A673 (cell line): ENCODE measurements at regions of chr7 and their contacts with region 1.

Region 1: GRCh38 chr7:148142660-148143248 is 447.8 kb upstream of the C7orf33 start:
- DNase-seq: peak; percentile 72
- H3K4me3 ChIP-seq: no peak overlapping the region
- H3K27ac ChIP-seq: no peak overlapping the region
- H3K4me1 ChIP-seq: peaks cover 8% of the 10 kb centered on the region
- H3K27me3 ChIP-seq: no peaks in the 10 kb centered on the region
- CTCF ChIP-seq: peak; percentile 70

Region 2: GRCh38 chr7:147245292-147245691 is 897.5 kb before region 1 on chr7:
- CTCF ChIA-PET with region 1: no interaction called
- POLR2A ChIA-PET with region 1: no interaction called
- intact Hi-C with region 1: loop called (anchors 10 kb)
- DNase-seq: peak; percentile 63
- H3K4me3 ChIP-seq: no peak overlapping the region
- H3K27ac ChIP-seq: no peak overlapping the region
- H3K4me1 ChIP-seq: no peaks in the 10 kb centered on the region
- H3K27me3 ChIP-seq: no peaks in the 10 kb centered on the region
- CTCF ChIP-seq: peak; percentile 77

Region 3: GRCh38 chr7:147432079-147432478 is 710.7 kb before region 1 on chr7:
- CTCF ChIA-PET with region 1: interaction called, 5 read pairs
- POLR2A ChIA-PET with region 1: no interaction called
- intact Hi-C with region 1: loop called (anchors 5 kb)
- DNase-seq: peak; percentile 28
- H3K4me3 ChIP-seq: no peak overlapping the region
- H3K27ac ChIP-seq: no peak overlapping the region
- H3K4me1 ChIP-seq: no peaks in the 10 kb centered on the region
- H3K27me3 ChIP-seq: no peaks in the 10 kb centered on the region
- CTCF ChIP-seq: peak; percentile 46

Region 4: GRCh38 chr7:147547249-147547897 is 595.4 kb before region 1 on chr7:
- CTCF ChIA-PET with region 1: no interaction called
- POLR2A ChIA-PET with region 1: no interaction called
- intact Hi-C with region 1: loop called (anchors 2 kb)
- DNase-seq: peak; percentile 49
- H3K4me3 ChIP-seq: no peak overlapping the region
- H3K27ac ChIP-seq: no peak overlapping the region
- H3K4me1 ChIP-seq: no peaks in the 10 kb centered on the region
- H3K27me3 ChIP-seq: no peaks in the 10 kb centered on the region
- CTCF ChIP-seq: peak; percentile 59